Heart right ventricle (tissue), 16 donors: ENCODE measurements at regions of chr10 and their contacts with region 1.

Region 1: GRCh38 chr10:20020677-20021076 is 204.4 kb downstream of the PLXDC2 start:
- DNase-seq: no peak
- ATAC-seq: no peak
- H3K4me3 ChIP-seq: no peak overlapping the region
- H3K27ac ChIP-seq: no peak overlapping the region
- H3K4me1 ChIP-seq: peaks cover 0 to 21% (median 7%) of the 10 kb centered on the region in 9 donors
- H3K27me3 ChIP-seq: no peaks in the 10 kb centered on the region
- CTCF ChIP-seq: no peak

Region 2: GRCh38 chr10:20265146-20265545 is 244.5 kb after region 1 on chr10:
- intact Hi-C with region 1: loop called in 1 of 10 experiments (anchors 10 kb)
- DNase-seq: no peak
- ATAC-seq: no peak
- H3K4me3 ChIP-seq: no peak overlapping the region
- H3K27ac ChIP-seq: no peak overlapping the region
- H3K4me1 ChIP-seq: peaks cover 0 to 12% (median 3%) of the 10 kb centered on the region in 9 donors
- H3K27me3 ChIP-seq: no peaks in the 10 kb centered on the region
- CTCF ChIP-seq: no peak